CD4-positive, alpha-beta T cell (primary cell): ENCODE measurements at regions of chr12 and their contacts with region 1.

Region 1: DNA sequence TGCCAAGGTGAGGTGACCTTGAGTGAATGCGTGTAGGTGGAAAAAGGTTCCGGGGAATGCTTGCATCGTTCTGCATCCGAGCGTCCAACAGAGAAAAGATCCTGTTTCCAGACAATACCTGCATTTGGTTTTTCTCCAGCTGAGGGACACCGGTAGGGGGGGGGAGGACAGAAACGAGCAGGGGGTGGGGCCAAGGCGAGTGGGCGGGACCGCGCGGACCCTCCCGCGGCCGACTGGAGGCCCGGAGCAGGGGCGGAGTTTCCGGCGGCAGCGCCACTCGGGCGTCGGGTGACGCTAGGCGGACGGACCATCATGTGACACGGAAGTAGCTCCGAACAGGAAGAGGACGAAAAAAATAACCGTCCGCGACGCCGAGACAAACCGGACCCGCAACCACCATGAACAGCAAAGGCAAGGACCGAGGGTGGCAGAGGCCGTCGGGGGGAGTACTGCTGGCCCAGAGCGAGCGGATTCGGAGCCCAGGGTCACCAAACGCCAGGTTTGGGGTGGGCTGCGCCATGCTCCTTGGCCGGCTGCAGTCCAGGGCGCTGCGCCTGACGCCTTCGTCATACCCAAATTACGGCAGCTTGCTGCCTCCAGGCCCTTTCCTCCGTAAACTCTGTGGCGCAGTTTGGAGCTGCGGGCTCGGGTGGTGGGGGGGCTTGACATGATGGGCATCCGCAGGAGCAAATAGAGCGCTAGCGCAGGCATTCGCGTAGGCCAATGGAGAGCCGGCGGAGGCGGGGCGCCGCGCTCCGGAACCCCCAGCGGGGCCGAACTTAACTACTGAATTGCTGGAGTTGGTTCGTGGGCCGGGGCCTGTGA is at the start of gene DAZAP2:
- DNase-seq: peak; percentile 90 to 98 (median 95)
- ATAC-seq: peak; percentile 86
- H3K4me3 ChIP-seq: peak within 1 kb of the TSS; percentile 99
- H3K4me3 Mint-ChIP-seq: peak within 1 kb of the TSS; percentile 96
- H3K27ac ChIP-seq: peak within 1 kb of the TSS; percentile 100
- H3K27ac Mint-ChIP-seq: peak within 1 kb of the TSS; percentile 97
- H3K4me1 ChIP-seq: peaks cover 36% of the 10 kb centered on the region
- H3K4me1 Mint-ChIP-seq: peaks cover 61% of the 10 kb centered on the region
- H3K27me3 ChIP-seq: no peaks in the 10 kb centered on the region
- H3K27me3 Mint-ChIP-seq: no peaks in the 10 kb centered on the region
- CTCF ChIP-seq: peak; percentile 20
- total RNA-seq, gene DAZAP2: 292 to 310 TPM

Region 2: DNA sequence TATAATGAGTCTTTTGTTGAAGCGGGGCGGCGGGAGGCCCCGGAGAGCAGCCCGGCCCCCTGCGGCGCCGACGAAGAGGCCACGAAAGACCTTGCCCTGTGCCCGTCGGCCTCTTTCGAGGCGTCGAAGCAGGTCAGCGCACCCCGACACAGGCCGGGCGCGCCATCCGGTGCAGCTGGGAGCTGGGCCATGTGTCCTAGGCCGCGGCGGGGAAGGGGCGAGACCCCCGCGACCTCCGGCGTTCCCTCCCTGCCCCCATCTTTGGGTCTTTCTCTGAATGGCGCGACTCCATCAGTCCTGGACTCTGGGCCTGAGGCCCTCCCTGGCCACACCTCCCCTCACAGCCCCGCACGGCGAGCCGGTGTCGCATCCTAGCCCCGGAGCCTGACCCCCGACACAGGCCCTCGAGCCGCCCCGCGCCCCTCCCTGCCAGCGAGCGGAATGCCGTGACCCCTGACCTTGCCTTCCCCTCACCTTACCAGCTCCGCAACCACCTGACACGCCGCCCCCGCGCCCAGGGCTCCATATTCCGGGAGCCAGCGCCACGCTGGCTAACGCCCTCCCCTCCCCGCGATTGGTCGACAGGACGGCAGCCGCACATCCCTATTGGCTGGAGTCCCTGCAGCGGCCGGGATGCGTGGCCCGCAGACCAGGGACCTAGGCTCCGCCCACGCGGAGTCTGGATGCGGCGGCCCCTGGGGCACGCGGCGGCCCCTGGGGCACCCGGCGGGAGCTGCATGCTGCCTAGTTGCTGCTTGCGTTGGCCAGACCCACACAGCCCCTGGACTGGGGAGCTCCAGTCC is 212.7 kb before region 1 on chr12 and contains the start of gene SLC11A2:
- CTCF ChIA-PET with region 1: interaction called, 3 read pairs
- POLR2A ChIA-PET with region 1: interaction called, 19 read pairs
- intact Hi-C with region 1: no loop called
- DNase-seq: peak; percentile 80 to 96 (median 88)
- ATAC-seq: peak; percentile 86
- H3K4me3 ChIP-seq: peak within 1 kb of the TSS; percentile 83
- H3K4me3 Mint-ChIP-seq: peak within 1 kb of the TSS; percentile 97
- H3K27ac ChIP-seq: peak within 1 kb of the TSS; percentile 78 to 83
- H3K27ac Mint-ChIP-seq: peak within 1 kb of the TSS; percentile 92
- H3K4me1 ChIP-seq: peaks cover 57% of the 10 kb centered on the region
- H3K4me1 Mint-ChIP-seq: peaks cover 63% of the 10 kb centered on the region
- H3K27me3 ChIP-seq: no peaks in the 10 kb centered on the region
- H3K27me3 Mint-ChIP-seq: no peaks in the 10 kb centered on the region
- CTCF ChIP-seq: no peak
- total RNA-seq, gene SLC11A2: 43.6 to 47.7 TPM

Region 3: DNA sequence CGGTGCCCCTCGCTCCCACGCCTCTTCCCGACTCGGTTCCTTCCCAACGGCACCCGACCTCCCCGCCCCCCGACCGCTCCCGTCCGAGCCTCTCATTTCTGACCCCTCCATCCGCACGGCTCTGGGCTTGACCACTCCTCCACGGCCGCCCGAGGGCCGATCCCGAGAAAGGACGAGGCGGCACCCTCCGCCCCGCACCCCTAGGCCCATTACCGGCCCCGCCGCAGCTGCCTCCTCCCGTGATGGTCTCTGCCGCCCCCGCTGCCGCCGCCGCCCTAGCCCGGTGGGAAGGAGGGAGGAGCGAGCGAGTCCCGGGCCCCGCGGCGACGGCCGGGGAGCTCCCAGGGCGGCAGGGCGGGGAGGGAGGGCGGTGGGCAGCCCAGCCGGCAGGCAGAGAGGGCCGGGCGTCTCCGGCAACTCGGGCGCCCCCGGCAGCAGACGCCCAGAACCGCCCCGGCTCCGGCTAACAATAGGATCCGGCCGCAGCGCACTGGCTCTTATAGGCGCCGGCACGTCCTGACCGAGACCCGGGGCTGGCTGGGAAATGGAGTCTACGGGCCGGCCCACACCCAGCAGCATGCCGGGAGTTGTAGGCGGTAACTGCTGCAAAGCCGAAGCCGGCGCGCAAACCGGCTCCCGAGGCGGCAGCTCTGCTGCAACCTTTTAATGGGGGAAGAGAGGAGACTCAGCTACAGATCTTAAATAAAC is 155.4 kb before region 1 on chr12 and contains the start of gene CSRNP2:
- CTCF ChIA-PET with region 1: no interaction called
- POLR2A ChIA-PET with region 1: interaction called, 26 read pairs
- intact Hi-C with region 1: loop called (anchors 2 kb)
- DNase-seq: peak; percentile 92 to 97 (median 94)
- ATAC-seq: peak; percentile 99
- H3K4me3 ChIP-seq: peak within 1 kb of the TSS; percentile 84
- H3K4me3 Mint-ChIP-seq: peak within 1 kb of the TSS; percentile 95
- H3K27ac ChIP-seq: peak within 1 kb of the TSS; percentile 40 to 71
- H3K27ac Mint-ChIP-seq: peak within 1 kb of the TSS; percentile 87
- H3K4me1 ChIP-seq: peaks cover 20% of the 10 kb centered on the region
- H3K4me1 Mint-ChIP-seq: peaks cover 41% of the 10 kb centered on the region
- H3K27me3 ChIP-seq: no peaks in the 10 kb centered on the region
- H3K27me3 Mint-ChIP-seq: no peaks in the 10 kb centered on the region
- CTCF ChIP-seq: peak; percentile 34
- total RNA-seq, gene CSRNP2: 14.4 to 16.5 TPM

Region 4: DNA sequence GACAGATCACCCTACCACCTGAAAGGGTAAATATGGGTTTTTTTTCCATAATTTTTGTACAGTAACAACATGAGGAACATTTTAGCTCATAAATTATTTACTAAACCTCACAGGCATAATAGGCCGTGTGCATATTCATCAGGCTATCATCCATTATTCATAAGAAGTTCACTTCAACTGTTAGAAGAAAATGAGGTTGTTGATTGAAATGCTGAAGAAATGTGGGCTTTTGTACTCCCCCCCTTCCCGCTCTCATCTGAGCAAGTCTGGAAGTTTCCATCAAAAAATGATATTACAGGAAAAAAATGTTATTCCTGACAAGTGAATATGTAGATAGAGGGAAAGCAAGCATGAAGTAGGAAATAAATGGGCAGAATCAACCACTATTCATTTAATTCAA is 13.0 kb before region 1 on chr12:
- CTCF ChIA-PET with region 1: interaction called, 4 read pairs
- POLR2A ChIA-PET with region 1: interaction called, 20 read pairs
- intact Hi-C with region 1: no loop called
- DNase-seq: no peak
- ATAC-seq: no peak
- H3K4me3 ChIP-seq: no peak overlapping the region
- H3K4me3 Mint-ChIP-seq: no peak overlapping the region
- H3K27ac ChIP-seq: no peak overlapping the region
- H3K27ac Mint-ChIP-seq: no peak overlapping the region
- H3K4me1 ChIP-seq: no peaks in the 10 kb centered on the region
- H3K4me1 Mint-ChIP-seq: no peaks in the 10 kb centered on the region
- H3K27me3 ChIP-seq: no peaks in the 10 kb centered on the region
- H3K27me3 Mint-ChIP-seq: no peaks in the 10 kb centered on the region
- CTCF ChIP-seq: no peak

Region 5: DNA sequence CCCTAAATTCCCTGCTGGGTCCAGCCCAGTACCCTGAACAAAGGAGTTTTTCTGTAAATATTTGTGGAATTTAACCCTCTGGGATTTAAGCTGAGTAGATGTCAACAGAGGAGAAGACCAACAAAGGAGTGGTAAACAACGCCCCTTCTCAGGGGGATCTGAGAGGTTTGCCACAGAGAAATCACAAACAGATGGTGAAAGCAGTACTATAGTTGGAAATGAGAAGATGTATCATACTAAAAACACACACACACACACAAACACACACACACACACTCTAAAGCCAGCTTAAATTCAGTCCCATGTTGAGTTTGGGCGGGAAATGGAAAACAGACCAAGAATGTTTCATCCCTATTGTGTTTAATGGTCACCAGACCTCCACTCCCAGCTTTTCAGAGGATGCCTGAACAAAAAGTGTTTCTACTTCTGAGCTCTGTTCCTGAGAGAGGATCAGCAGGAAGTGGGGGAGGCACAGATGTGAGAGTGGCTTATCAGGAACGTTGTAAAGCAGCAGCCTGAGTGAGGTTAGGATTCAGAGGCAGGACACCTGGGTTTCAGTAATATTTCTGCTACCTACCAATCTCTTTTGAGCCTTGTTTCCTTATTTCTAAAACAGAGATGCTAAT is 82.1 kb after region 1 on chr12:
- CTCF ChIA-PET with region 1: no interaction called
- POLR2A ChIA-PET with region 1: interaction called, 17 read pairs
- intact Hi-C with region 1: no loop called
- DNase-seq: peak in 3 of 14 experiments; percentile 39 to 62 (median 41)
- ATAC-seq: no peak
- H3K4me3 ChIP-seq: peak overlapping the region; percentile 82
- H3K4me3 Mint-ChIP-seq: peak overlapping the region; percentile 97
- H3K27ac ChIP-seq: peak overlapping the region; percentile 72 to 91
- H3K27ac Mint-ChIP-seq: peak overlapping the region; percentile 87
- H3K4me1 ChIP-seq: peaks cover 81% of the 10 kb centered on the region
- H3K4me1 Mint-ChIP-seq: peaks cover 86% of the 10 kb centered on the region
- H3K27me3 ChIP-seq: no peaks in the 10 kb centered on the region
- H3K27me3 Mint-ChIP-seq: no peaks in the 10 kb centered on the region
- CTCF ChIP-seq: no peak

Region 6: DNA sequence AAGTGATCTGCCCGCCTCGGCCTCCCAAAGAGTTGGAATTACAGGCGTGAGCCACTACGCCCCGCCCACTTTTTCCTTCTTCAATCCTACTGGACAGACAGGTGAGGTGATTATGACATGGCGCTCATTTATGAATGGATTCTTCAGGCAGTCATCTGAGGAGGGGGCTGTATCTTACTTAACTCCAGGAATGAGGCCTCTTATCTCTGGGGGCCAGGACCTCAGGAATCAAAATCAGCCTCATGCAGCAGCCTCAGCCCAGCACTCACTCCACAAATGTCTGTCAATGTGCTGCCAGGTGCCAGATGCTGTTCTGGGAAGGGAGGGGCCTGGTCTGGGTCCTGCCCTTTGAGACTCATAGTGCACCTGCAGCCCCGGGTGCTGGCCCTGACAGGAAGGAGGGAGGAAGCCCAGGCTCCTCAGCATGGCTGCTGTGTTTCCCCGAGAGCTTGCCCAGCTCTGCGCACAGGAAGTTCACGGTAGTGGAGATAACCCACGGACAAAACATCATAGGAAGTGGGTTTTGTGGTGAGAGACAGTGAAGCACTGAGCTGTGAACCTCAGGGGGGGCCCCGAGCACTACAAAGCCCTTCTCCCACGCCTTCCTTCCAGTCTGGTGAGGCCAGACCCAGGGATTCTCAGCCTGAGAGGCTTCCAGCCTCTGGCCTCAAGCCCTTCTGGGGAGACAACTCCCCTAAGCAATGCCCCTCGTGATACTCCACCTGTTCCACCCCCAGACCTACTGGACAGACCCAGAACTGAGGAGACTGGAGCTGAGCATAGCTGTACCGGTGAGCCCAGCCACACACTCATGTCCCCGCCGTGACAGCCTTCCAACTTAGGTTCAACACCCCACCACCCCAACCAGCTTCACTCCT is 130.2 kb after region 1 on chr12:
- CTCF ChIA-PET with region 1: no interaction called
- POLR2A ChIA-PET with region 1: interaction called, 15 read pairs
- intact Hi-C with region 1: no loop called
- DNase-seq: peak; percentile 74 to 98 (median 84)
- ATAC-seq: peak; percentile 94
- H3K4me3 ChIP-seq: peak overlapping the region; percentile 42
- H3K4me3 Mint-ChIP-seq: peak overlapping the region; percentile 66
- H3K27ac ChIP-seq: peak overlapping the region in 1 of 2 donors; percentile 59
- H3K27ac Mint-ChIP-seq: peak overlapping the region; percentile 89
- H3K4me1 ChIP-seq: peaks cover 45% of the 10 kb centered on the region
- H3K4me1 Mint-ChIP-seq: peaks cover 67% of the 10 kb centered on the region
- H3K27me3 ChIP-seq: no peaks in the 10 kb centered on the region
- H3K27me3 Mint-ChIP-seq: no peaks in the 10 kb centered on the region
- CTCF ChIP-seq: no peak